ENCODE measurements at regions of chr5 and their contacts with region 1.

Region 1: GRCh38 chr5:180315762-180316212 is 23.9 kb upstream of the MAPK9 start:
- DNase-seq: peak; percentile 81
- ATAC-seq: peak; percentile 58
- H3K4me3 Mint-ChIP-seq: peak overlapping the region; percentile 20; the same call in 1 of the 2 replicates
- H3K27ac Mint-ChIP-seq: 0 out of 2 replicates have a peak overlapping the region, but pooled peaks have one; percentile 76
- H3K4me1 Mint-ChIP-seq: peaks cover 21% of the 10 kb centered on the region
- H3K27me3 Mint-ChIP-seq: no peaks in the 10 kb centered on the region
- CTCF ChIP-seq: peak; percentile 93

Region 2: GRCh38 chr5:180209137-180209581 is 106.6 kb before region 1 on chr5 and contains the start of gene RASGEF1C:
- CTCF ChIA-PET with region 1: interaction called, 10 read pairs
- POLR2A ChIA-PET with region 1: no interaction called
- DNase-seq: peak; percentile 71
- ATAC-seq: peak; percentile 82
- H3K4me3 Mint-ChIP-seq: peak within 1 kb of the TSS; percentile 72
- H3K27ac Mint-ChIP-seq: no peak within 1 kb of the TSS
- H3K4me1 Mint-ChIP-seq: peaks cover 10% of the 10 kb centered on the region
- H3K27me3 Mint-ChIP-seq: peaks cover 35% of the 10 kb centered on the region
- CTCF ChIP-seq: 0 out of 2 replicates have a peak, but pooled peaks have one; percentile 13
- total RNA-seq, gene RASGEF1C: 0.44 to 0.96 TPM (median 0.82 TPM) in 3 replicates

Region 3: GRCh38 chr5:180291943-180292831 is 23.6 kb before region 1 on chr5 and contains the start of gene MAPK9:
- CTCF ChIA-PET with region 1: interaction called, 65 read pairs
- POLR2A ChIA-PET with region 1: interaction called, 3 read pairs
- DNase-seq: peak; percentile 85
- ATAC-seq: peak; percentile 74
- H3K4me3 Mint-ChIP-seq: peak within 1 kb of the TSS; percentile 93
- H3K27ac Mint-ChIP-seq: peak within 1 kb of the TSS; percentile 88
- H3K4me1 Mint-ChIP-seq: peaks cover 64% of the 10 kb centered on the region
- H3K27me3 Mint-ChIP-seq: no peaks in the 10 kb centered on the region
- CTCF ChIP-seq: no peak
- total RNA-seq, gene MAPK9: 42.4 to 42.9 TPM (median 42.9 TPM) in 3 replicates

Region 4: DNA sequence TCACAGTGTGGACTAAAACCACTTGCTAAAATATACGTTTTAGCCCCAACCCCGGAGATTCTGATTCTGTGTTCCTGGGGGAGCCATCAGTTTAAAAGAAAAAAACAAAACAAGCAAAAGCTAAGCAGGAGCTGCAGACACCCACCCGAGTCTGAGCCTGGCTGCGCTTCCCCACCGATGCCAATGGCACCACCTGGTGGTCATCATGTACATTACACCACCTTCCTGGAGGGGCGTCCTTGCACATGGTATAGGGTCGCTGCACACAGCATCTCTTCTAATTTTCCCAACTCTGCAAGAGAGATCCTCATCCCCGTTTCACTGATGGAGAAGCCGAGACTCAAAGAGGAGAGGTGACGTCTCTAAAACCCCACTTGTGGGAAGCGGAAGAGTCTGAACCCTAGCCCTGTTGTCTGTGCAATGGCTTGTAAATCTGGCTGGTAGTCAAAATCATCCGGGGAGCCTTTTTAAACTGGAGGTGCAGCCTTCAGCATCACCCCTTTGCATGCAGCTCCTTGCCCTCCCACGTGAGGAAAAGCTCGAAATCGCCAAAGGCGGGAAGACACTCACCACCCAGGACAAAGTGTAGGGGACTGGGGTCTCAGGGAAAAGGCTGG is 155.3 kb after region 1 on chr5:
- CTCF ChIA-PET with region 1: interaction called, 24 read pairs
- POLR2A ChIA-PET with region 1: no interaction called
- DNase-seq: peak; percentile 74
- ATAC-seq: peak; percentile 87
- H3K4me3 Mint-ChIP-seq: no peak overlapping the region
- H3K27ac Mint-ChIP-seq: no peak overlapping the region
- H3K4me1 Mint-ChIP-seq: peaks cover 8% of the 10 kb centered on the region
- H3K27me3 Mint-ChIP-seq: peaks cover 2% of the 10 kb centered on the region; the same call in 1 of the 2 replicates
- CTCF ChIP-seq: peak; percentile 97